Spleen (tissue), 13 donors: ENCODE measurements at regions of chr6 and their contacts with region 1.

Region 1: DNA sequence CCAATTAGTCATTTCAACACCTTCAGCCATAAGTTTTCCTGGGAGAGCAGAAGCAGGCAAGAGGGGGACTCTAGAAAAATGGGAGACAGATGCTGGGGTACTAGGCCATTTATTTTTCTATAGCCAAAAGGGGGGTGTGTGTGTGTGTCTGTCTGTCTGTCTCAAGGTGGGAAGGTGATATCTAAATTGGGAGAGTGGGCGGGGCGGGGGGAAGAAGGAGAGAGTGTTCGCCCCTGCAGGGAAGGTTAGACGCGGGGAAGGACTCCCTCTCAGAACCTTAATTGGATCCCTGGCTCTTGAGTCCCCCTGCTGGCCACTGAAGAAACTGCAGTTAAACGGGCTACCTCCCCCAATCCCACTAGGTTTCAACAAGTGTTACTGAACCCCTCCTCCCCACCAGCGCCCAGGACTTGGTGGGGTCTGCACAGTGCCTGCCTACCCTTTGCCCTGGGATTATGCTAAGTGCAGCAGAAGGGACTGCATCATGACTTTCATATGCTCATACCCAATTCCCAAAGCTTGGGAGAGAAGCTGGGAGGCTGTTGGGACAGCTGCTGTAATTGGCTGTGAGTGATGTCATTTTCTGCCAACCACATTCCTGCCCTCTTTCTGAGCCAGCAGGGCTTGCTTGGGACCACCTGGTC is 45.8 kb downstream of the FOXP4 start:
- DNase-seq: peak; percentile 88
- H3K4me3 ChIP-seq: no peak overlapping the region
- H3K27ac ChIP-seq: no peak overlapping the region
- H3K4me1 ChIP-seq: no peaks in the 10 kb centered on the region
- H3K27me3 ChIP-seq: no peaks in the 10 kb centered on the region
- CTCF ChIP-seq: peak; percentile 83 to 94 (median 91)
- POLR2A ChIP-seq: no peak

Region 2: DNA sequence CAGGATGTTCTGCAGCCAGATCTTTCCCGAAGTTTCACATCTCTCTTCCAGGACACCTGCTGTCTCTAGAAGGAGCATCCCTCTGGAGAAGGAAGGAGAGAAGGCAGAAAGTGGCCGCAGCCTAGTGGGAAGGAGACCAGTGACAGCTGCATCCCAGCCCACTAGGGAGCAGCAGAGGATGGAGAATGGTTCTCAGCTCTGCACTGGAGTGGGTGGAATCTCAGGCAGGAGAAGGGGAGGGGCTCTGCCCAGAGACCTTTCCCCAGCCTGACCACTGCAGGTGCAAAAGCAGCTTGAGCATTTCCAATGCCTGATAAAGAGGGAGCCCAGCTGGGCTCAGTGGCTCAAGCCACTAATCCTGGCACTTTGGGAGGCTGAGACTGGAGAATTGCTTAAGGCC is 224.3 kb before region 1 on chr6:
- intact Hi-C with region 1: loop called (anchors 5 kb)
- DNase-seq: no peak
- H3K4me3 ChIP-seq: no peak overlapping the region
- H3K27ac ChIP-seq: no peak overlapping the region
- H3K4me1 ChIP-seq: peaks cover 9 to 28% (median 22%) of the 10 kb centered on the region in 6 donors
- H3K27me3 ChIP-seq: peaks cover 2 to 92% (median 44%) of the 10 kb centered on the region in 7 donors
- CTCF ChIP-seq: peak in 4 of 11 experiments; percentile 11 to 17 (median 16)
- POLR2A ChIP-seq: no peak

Region 3: DNA sequence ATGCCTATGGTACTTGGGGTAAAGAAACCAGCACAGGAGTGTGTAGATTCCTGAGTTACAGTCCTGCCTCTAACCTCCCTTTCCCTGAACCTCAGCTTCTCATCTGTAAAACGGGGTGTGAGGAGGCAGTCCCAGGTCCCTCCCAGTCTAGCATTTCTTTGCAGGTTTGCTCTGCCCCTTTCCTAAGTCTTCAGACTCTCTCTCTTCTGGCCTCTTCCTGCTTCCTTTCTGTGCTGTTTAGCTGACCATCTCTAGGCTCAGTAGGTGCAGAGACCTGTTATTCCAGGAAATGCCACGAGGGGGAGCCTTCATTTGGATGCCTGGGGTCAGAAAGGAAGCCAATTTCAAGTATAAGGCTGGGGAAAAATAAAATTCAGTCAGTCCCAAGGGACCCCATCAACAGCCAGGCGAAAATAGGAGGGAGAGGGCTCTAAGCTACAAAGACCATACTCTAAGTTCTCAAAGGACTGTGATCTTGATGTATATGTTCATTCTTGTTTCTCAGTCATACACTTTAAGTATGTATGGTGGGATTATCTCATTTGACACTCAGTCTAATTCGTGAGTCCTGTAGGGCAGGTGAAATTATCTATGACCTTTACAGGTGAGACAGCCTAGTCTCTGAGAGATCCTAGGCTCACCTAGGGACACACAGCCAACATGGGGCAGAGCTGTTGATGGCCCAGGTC is 167.5 kb before region 1 on chr6:
- intact Hi-C with region 1: loop called (anchors 5 kb)
- DNase-seq: peak; percentile 83
- H3K4me3 ChIP-seq: no peak overlapping the region
- H3K27ac ChIP-seq: no peak overlapping the region
- H3K4me1 ChIP-seq: peaks cover 14 to 45% (median 38%) of the 10 kb centered on the region in 6 donors
- H3K27me3 ChIP-seq: peaks cover 0 to 57% (median 23%) of the 10 kb centered on the region in 7 donors
- CTCF ChIP-seq: peak; percentile 76 to 94 (median 88)
- POLR2A ChIP-seq: no peak

Region 4: DNA sequence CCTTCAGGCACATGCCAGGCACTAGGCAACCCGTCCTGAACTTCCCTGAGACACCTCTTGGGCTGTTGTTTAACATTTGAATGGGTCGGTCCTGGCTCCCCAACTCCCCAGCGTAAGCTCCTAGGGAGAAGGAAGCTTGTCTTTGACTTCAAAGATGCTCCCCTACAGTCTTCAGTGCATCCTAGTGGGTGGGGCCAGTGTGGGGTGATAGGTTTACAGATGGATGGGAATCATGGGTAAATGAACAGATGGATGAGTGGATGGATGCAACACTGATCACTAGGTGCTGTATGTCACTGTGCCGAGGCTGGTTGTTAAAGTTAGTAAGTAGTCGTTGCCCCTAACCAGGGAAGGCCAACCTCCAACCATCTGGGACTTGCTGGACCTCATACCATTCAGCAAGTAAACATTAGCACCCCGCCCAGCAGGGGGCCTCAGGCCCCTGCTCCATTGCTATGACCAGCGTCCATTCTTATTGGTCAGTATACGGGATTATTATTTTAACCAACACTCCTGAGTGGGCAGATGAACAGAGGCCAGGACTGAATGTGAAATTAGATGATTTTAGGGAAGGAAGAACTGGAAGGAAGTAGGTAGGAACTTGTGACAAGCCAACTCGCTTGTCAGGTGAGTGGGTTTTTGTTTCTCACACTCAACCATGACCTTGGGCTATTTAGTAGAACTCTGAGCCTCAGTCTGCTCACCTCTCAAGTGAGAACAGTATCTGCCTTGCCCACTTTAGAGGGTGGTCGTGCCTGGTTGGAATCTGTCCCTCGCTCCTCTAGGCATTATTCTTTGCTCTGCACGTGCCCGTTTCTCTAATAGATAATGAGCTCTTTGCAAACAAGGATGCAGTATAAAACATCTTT is 128.7 kb before region 1 on chr6:
- intact Hi-C with region 1: loop called (anchors 5 kb)
- DNase-seq: no peak
- H3K4me3 ChIP-seq: no peak overlapping the region
- H3K27ac ChIP-seq: no peak overlapping the region
- H3K4me1 ChIP-seq: peaks cover 0 to 13% (median 1%) of the 10 kb centered on the region in 6 donors
- H3K27me3 ChIP-seq: peaks cover 0 to 54% (median 7%) of the 10 kb centered on the region in 7 donors
- CTCF ChIP-seq: peak; percentile 34 to 70 (median 62)
- POLR2A ChIP-seq: no peak

Region 5: DNA sequence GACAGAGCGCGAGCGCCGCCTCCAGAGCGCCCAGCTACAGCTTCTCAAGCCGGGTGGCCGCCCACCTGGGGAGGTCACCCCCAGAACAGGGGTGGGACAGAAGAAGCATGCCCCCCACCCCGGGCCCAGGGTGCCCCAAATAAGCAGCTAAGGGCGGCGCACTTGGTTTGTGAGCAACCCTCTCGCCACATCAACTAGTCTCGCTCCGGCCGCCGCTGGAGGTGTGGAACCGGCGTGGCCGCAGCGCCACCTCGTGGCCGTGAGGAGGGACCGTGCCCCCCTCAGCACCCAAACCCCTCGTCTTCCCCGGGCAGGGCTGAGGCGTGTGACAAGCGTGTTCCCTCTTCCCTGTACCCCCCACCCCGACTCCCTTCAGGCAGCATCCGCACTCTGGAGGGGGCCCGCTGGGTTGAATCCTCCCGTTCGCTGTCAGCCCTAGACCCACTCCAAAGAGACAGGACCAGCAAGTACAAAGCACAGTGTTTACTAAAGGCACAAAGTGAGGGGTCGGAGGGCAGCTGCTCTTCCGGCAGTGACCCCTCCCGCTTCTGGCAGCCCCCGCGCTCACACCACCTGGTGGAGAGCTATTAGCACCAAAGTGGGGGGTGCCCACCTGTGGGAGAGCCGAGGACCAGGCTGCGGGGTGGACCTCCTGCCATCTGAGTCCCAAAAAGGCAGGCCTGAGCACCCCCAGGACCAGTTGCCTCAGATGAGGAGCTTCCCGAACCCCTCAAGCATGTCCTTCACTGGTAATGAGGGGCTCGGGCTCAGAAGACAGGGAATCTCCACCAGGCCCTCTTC is 91.7 kb after region 1 on chr6:
- intact Hi-C with region 1: no loop called
- DNase-seq: peak; percentile 97
- H3K4me3 ChIP-seq: peak overlapping the region; percentile 8 to 68 (median 39)
- H3K27ac ChIP-seq: peak overlapping the region; percentile 65 to 87 (median 79)
- H3K4me1 ChIP-seq: peaks cover 14 to 31% (median 26%) of the 10 kb centered on the region in 6 donors
- H3K27me3 ChIP-seq: peaks cover 0 to 5% (median 0%) of the 10 kb centered on the region in 7 donors
- CTCF ChIP-seq: peak; percentile 78 to 96 (median 92)
- POLR2A ChIP-seq: no peak